HCT116 (cell line): ENCODE measurements at regions of chr16 and their contacts with region 1.

Region 1: DNA sequence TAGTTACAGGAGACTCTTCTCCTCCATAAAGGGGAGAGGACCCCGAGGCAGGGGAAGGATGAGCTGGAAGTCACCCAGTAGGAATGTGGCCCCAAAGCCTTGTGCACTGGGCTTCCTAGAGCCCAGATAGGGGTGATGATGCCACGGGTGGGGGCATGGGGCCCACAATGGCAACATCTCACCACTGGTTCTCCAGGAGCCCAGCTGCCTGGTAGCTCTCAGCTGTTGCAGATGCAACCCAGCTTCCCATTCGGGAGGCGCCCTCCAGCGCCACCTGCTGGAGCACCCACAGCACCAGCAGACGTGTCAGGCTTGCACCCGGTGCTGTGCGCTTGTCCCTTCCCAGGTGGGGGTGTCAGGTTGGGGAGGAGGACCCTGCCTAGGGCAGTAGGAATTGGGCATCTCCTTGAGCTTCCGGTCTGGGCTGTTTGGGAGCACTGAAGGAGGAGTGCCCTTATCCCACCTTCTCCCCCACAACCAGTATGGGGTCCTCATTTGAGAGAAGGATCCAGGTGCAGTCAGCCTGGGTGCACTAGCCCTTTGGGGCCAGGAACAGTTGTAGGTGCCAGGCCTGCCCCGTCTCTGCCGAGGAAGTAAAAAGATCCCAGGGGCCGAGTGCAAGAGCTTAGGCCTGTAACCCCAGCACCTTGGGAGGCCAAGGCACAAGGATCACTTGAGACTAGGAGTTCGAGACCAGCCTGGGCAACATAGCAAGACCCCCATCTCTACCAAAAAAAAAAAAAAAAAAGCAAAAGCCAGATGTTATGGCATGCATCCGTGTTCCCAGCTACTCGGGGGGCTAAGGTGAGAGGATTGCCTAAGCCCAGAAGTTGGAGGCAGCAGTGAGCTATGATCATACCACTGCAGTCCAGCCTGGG is 14.4 kb downstream of the CDIPT start:
- DNase-seq: peak; percentile 44
- ATAC-seq: peak; percentile 93
- H3K4me3 ChIP-seq: no peak overlapping the region
- H3K27ac ChIP-seq: no peak overlapping the region
- H3K4me1 ChIP-seq: peaks cover 0 to 5% of the 10 kb centered on the region in 2 experiments; a peak in 3 of 4 replicates
- H3K27me3 ChIP-seq: no peaks in the 10 kb centered on the region
- CTCF ChIP-seq: peak; percentile 84 to 97 (median 95)
- POLR2A ChIP-seq: no peak
- RAD21 ChIP-seq: peak; percentile 93

Region 2: GRCh38 chr16:29694384-29695195 is 154.1 kb before region 1 on chr16:
- CTCF ChIA-PET with region 1: interaction called, 14 read pairs
- POLR2A ChIA-PET with region 1: no interaction called
- RAD21 ChIA-PET with region 1: no interaction called
- intact Hi-C with region 1: no loop called
- DNase-seq: no peak
- ATAC-seq: no peak
- H3K4me3 ChIP-seq: no peak overlapping the region
- H3K27ac ChIP-seq: no peak overlapping the region
- H3K4me1 ChIP-seq: peaks cover 0 to 6% of the 10 kb centered on the region in 2 experiments; a peak in 2 of 4 replicates
- H3K27me3 ChIP-seq: no peaks in the 10 kb centered on the region
- CTCF ChIP-seq: no peak
- POLR2A ChIP-seq: no peak
- RAD21 ChIP-seq: no peak

Region 3: DNA sequence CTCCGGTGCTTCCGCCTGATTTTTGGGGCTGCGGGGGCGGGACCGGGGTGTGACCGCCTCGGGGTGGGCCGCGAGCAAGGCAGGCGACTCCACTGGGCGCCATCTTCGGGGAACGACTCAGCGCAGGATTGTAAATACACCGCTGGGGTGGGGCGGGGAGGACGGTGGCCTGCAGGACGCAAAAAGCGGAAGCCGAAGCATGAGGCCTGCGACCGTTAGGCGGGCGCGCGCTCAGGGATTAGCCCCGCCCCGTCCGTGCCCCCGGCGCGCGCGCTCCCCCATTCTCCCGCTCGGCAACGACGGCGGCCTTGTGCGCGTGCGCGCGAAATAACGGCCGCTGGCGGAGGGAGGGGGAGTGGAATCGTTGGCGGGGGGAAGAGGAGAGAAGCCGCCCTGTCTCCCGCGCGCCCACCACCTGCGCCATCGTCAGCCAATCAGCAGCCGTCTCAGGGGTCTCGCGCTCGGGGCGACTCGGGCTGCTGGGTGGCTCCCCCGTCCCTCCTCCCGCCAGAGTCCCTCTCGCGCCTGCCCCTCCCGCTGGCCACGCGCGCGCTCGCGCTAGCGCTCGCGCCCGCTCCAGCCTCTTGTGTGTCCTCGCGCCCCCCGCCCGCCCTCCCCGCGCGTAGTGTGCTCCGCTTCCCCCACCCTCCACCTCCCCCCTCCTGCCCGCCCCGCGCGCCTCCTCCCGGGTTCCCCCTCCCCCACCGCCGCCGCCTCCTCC is 43.1 kb before region 1 on chr16:
- CTCF ChIA-PET with region 1: interaction called, 36 read pairs
- POLR2A ChIA-PET with region 1: no interaction called
- RAD21 ChIA-PET with region 1: interaction called in 1 of 2 experiments, 3 read pairs
- intact Hi-C with region 1: no loop called
- DNase-seq: peak; percentile 93
- ATAC-seq: peak; percentile 56
- H3K4me3 ChIP-seq: peak overlapping the region; percentile 67 to 70
- H3K27ac ChIP-seq: peak overlapping the region; percentile 85
- H3K4me1 ChIP-seq: peaks cover 27 to 55% of the 10 kb centered on the region in 2 experiments
- H3K27me3 ChIP-seq: no peaks in the 10 kb centered on the region
- CTCF ChIP-seq: no peak
- POLR2A ChIP-seq: peak; percentile 75
- RAD21 ChIP-seq: no peak

Region 4: DNA sequence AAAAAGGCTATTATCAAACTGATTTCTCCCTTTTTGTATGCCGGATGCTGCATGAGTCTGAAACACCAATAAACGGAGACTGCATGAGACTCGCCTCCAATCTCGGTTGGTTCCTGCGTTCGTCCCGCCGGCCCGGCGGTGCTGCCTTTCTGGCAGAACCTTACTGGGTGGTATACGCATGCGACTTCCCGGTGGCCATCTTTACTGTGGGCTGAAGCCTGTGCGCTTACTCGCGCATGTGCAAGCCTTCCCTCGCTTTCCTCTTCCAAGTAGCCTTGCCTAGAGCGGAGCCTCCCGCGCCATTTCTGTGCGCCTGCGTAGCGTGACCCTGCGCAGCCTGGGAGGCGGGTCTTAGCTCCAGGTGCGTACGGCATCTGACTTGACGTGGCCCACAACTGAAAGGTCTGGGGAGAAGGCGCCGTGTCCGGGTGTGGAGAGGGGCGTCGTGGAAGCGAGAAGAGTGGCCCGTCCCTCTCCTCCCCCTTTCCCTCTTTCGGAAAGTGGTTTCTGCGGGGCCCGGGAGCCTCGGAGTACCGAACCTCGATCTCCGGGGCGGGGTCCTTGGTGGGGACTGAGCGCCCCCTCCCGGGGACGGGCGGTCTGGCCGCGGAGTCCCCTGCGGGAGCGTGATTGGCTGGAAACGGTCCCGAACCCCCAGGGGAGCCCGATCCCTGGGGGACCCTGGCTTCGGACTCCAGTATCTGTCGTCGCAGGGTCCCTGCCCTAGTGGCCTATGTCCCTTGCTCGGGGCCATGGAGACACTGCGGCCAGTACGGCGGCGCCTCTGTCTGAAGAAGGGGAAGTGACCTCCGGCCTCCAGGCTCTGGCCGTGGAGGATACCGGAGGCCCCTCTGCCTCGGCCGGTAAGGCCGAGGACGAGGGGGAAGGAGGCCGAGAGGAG is 32.6 kb before region 1 on chr16 and contains the start of gene PAGR1:
- CTCF ChIA-PET with region 1: interaction called, 28 read pairs
- POLR2A ChIA-PET with region 1: interaction called, 14 read pairs
- RAD21 ChIA-PET with region 1: interaction called, 5 to 8 read pairs
- intact Hi-C with region 1: no loop called
- DNase-seq: peak; percentile 99
- ATAC-seq: peak; percentile 69
- H3K4me3 ChIP-seq: peak within 1 kb of the TSS; percentile 87 to 98
- H3K27ac ChIP-seq: peak within 1 kb of the TSS; percentile 98
- H3K4me1 ChIP-seq: peaks cover 32 to 78% of the 10 kb centered on the region in 2 experiments
- H3K27me3 ChIP-seq: no peaks in the 10 kb centered on the region
- CTCF ChIP-seq: peak in 2 of 3 experiments; percentile 83 to 90; a peak in 4 of 6 replicates
- POLR2A ChIP-seq: peak; percentile 85
- RAD21 ChIP-seq: no peak
- total RNA-seq, gene PAGR1: 28.9 TPM

Region 5: DNA sequence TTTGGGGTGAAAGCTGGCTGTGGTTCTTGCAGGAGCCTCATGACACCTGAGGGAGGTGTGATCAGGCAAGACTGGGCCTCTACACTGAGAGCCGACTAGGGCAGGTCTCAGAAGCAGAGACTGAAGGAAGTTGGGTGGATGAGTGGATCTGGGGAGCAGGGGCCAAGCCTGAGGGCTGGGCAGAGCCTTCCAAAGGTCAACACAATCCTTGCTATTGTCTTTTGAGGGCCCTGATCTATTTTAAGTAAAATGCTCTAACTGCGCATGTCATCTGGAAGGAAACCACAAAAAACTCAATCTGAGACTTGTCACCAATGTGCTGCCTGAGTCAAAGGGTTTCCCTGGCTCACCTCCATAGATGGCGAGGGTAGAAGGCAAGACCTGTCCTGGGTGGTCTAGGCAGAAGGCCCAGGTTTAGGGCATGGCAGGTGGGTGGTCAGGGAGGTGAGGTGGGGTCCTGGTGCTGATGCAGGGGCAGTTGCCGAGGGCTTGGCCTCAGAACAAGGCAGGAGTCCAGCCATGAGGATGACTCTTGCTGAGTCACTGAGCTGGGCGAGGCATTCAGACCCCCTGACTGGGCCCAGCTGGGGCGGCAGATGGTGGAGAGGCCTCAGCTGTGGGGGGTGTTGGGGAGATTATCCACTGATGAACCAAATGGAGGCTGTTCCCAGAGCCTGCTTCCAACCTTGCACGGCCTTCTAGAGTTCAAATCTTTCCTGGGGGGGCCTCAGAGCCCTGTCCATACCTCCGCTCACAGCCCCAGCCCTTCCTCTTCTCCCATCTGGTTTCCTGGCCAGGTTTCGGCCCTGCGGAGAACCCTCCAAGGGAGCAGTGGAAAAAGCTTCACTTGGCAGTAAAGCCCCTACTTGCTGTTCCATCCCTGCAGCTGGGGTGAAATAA is 23.3 kb before region 1 on chr16:
- CTCF ChIA-PET with region 1: interaction called, 29 read pairs
- POLR2A ChIA-PET with region 1: interaction called, 14 read pairs
- RAD21 ChIA-PET with region 1: interaction called in 1 of 2 experiments, 8 read pairs
- intact Hi-C with region 1: no loop called
- DNase-seq: no peak
- ATAC-seq: peak; percentile 41
- H3K4me3 ChIP-seq: peak overlapping the region in 1 of 2 experiments; percentile 38; a peak in 2 of 4 replicates
- H3K27ac ChIP-seq: peak overlapping the region; percentile 98
- H3K4me1 ChIP-seq: peaks cover 72 to 99% of the 10 kb centered on the region in 2 experiments
- H3K27me3 ChIP-seq: no peaks in the 10 kb centered on the region
- CTCF ChIP-seq: no peak
- POLR2A ChIP-seq: no peak
- RAD21 ChIP-seq: no peak

Region 6: GRCh38 chr16:29862884-29863668 is 14.4 kb after region 1 on chr16 and contains the start of gene CDIPT:
- CTCF ChIA-PET with region 1: interaction called, 19 read pairs
- POLR2A ChIA-PET with region 1: no interaction called
- RAD21 ChIA-PET with region 1: no interaction called
- intact Hi-C with region 1: no loop called
- DNase-seq: peak; percentile 98
- ATAC-seq: peak; percentile 99
- H3K4me3 ChIP-seq: peak within 1 kb of the TSS; percentile 85 to 89
- H3K27ac ChIP-seq: peak within 1 kb of the TSS; percentile 80
- H3K4me1 ChIP-seq: peaks cover 0 to 15% of the 10 kb centered on the region in 2 experiments; a peak in 3 of 4 replicates
- H3K27me3 ChIP-seq: no peaks in the 10 kb centered on the region
- CTCF ChIP-seq: peak; percentile 58 to 77 (median 70); a peak in 5 of 6 replicates
- POLR2A ChIP-seq: peak; percentile 52
- RAD21 ChIP-seq: peak; percentile 49
- total RNA-seq, gene CDIPT: 58.3 TPM

Region 7: GRCh38 chr16:29900102-29900887 is 51.6 kb after region 1 on chr16 and contains the start of gene ASPHD1:
- CTCF ChIA-PET with region 1: interaction called, 10 read pairs
- POLR2A ChIA-PET with region 1: no interaction called
- RAD21 ChIA-PET with region 1: no interaction called
- intact Hi-C with region 1: no loop called
- DNase-seq: peak; percentile 29
- ATAC-seq: peak; percentile 66
- H3K4me3 ChIP-seq: peak within 1 kb of the TSS; percentile 71 to 75
- H3K27ac ChIP-seq: peak within 1 kb of the TSS; percentile 78
- H3K4me1 ChIP-seq: peaks cover 9 to 31% of the 10 kb centered on the region in 2 experiments
- H3K27me3 ChIP-seq: no peaks in the 10 kb centered on the region
- CTCF ChIP-seq: no peak
- POLR2A ChIP-seq: no peak
- RAD21 ChIP-seq: no peak
- total RNA-seq, gene ASPHD1: 18.4 TPM

Region 8: DNA sequence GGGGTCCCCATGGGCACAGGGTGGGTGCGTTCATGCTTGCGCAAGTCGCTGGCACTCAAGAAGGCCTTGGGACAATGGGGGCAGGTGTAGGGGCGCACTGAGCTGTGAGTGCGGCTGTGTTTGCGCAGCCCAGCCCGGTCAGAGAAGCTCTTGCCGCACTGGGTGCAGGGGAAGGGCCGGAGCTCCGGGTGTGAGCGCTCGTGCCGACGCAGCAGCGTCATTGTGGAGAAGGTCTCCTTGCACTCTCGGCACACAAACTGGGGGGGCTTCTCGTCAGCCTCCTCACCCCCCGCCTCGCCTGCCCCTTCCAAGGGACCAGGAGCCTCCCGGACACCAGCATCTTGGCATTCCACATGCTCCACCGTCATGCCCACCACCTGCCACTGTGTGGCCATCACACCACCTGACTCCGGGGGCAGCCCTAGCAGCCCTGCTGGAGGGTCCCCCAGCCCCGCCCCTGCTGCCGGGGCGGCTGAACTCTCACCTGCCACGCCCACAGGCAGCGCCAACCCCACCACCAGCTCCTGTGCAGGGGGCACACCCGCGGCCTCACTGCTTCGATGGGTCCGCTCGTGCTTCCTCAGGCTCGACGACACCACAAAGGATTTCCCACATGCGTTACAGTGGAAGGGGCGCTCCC is 1212.6 kb after region 1 on chr16:
- CTCF ChIA-PET with region 1: no interaction called
- POLR2A ChIA-PET with region 1: no interaction called
- RAD21 ChIA-PET with region 1: no interaction called
- intact Hi-C with region 1: no loop called
- DNase-seq: no peak
- ATAC-seq: no peak
- H3K4me3 ChIP-seq: no peak overlapping the region
- H3K27ac ChIP-seq: no peak overlapping the region
- H3K4me1 ChIP-seq: peaks cover 0 to 10% of the 10 kb centered on the region in 2 experiments; a peak in 2 of 4 replicates
- H3K27me3 ChIP-seq: no peaks in the 10 kb centered on the region
- CTCF ChIP-seq: no peak
- POLR2A ChIP-seq: no peak
- RAD21 ChIP-seq: no peak